PC-9 (cell line): ENCODE measurements at regions of chr10 and their contacts with region 1.

Region 1: DNA sequence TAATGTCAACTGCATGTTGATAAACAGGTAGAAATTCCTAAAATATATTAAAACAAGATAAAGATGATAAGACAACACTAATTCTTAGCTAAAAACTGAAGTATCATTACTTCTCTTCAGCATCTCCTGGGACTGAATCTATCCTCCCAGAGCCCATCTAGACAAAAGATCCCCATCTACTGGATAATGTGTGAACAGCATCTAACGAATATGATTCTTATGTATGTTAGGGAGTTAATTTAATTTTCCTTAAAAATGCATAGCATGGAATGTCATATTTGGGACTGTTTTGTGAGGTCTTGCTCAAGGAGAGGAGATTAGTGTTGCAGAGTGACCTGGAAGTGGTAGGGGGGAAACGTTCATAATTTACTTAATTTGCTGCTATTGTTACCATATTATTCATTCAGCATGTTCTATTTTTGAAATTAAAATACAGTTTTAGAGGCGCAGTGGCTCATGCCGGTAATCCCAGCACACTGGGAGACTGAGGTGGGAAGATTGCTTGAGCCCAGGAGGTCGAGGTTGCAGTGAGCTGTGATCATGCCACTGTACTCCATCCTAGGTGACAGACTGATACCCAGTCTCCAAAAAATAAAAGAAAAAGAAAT is 305.1 kb upstream of the CSTF2T start:
- DNase-seq: no peak
- H3K4me3 ChIP-seq: no peak overlapping the region
- H3K27ac ChIP-seq: no peak overlapping the region
- H3K4me1 ChIP-seq: no peaks in the 10 kb centered on the region
- H3K27me3 ChIP-seq: no peaks in the 10 kb centered on the region
- CTCF ChIP-seq: peak; percentile 78

Region 2: DNA sequence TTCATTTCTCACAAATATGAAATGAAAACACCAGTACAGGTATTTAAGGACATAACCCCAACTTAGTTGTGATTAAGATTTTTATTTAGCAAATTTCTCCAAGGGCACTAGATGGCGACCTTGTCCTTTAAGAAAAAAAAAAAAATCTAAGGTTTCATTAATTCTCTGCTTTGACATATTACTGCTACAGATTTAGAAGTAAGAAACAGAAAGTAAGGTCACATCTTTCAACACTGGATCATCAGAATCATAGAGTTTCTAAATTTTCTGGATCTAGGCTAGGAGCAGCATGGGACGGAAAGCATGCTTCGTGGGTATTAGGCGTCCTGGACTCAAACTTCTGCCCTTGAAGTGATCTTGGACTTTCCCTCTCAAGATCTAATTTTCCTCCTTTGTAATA is 1015.7 kb before region 1 on chr10:
- CTCF ChIA-PET with region 1: no interaction called
- POLR2A ChIA-PET with region 1: no interaction called
- intact Hi-C with region 1: loop called (anchors 5 kb)
- DNase-seq: no peak
- H3K4me3 ChIP-seq: no peak overlapping the region
- H3K27ac ChIP-seq: no peak overlapping the region
- H3K4me1 ChIP-seq: 0 out of 2 replicates have a peak, but pooled peaks cover 4% of the 10 kb centered on the region
- H3K27me3 ChIP-seq: peaks cover 20% of the 10 kb centered on the region; the same call in 1 of the 2 replicates
- CTCF ChIP-seq: peak; percentile 60

Region 3: DNA sequence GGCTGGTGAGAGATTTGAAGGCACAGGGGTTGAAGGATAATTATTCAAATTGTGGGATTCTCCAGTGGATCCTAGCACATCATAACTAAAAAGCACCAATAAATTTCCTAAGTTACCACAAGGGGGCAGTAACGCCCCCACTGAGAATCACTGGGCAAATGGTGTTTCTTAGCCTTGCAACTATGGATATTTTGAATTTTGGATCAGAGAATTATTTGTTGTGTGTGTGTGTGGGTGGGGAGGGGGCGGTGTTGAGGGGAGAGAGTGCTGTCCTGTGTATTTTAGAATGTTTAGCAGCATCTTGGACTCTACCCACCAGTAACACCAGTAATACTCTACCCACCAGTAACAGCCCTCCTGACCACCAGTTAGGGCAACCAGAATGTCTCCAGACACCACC is 993.5 kb before region 1 on chr10:
- CTCF ChIA-PET with region 1: no interaction called
- POLR2A ChIA-PET with region 1: no interaction called
- intact Hi-C with region 1: loop called (anchors 1 kb)
- DNase-seq: no peak
- H3K4me3 ChIP-seq: no peak overlapping the region
- H3K27ac ChIP-seq: no peak overlapping the region
- H3K4me1 ChIP-seq: no peaks in the 10 kb centered on the region
- H3K27me3 ChIP-seq: no peaks in the 10 kb centered on the region
- CTCF ChIP-seq: peak; percentile 92

Region 4: GRCh38 chr10:51063659-51064535 is 940.5 kb before region 1 on chr10:
- CTCF ChIA-PET with region 1: no interaction called
- POLR2A ChIA-PET with region 1: no interaction called
- intact Hi-C with region 1: loop called (anchors 5 kb)
- DNase-seq: no peak
- H3K4me3 ChIP-seq: no peak overlapping the region
- H3K27ac ChIP-seq: no peak overlapping the region
- H3K4me1 ChIP-seq: no peaks in the 10 kb centered on the region
- H3K27me3 ChIP-seq: no peaks in the 10 kb centered on the region
- CTCF ChIP-seq: peak; percentile 79

Region 5: GRCh38 chr10:51389415-51390321 is 614.8 kb before region 1 on chr10:
- CTCF ChIA-PET with region 1: interaction called, 4 read pairs
- POLR2A ChIA-PET with region 1: no interaction called
- intact Hi-C with region 1: loop called (anchors 5 kb)
- DNase-seq: peak in 1 of 2 experiments; percentile 11
- H3K4me3 ChIP-seq: no peak overlapping the region
- H3K27ac ChIP-seq: no peak overlapping the region
- H3K4me1 ChIP-seq: no peaks in the 10 kb centered on the region
- H3K27me3 ChIP-seq: no peaks in the 10 kb centered on the region
- CTCF ChIP-seq: peak; percentile 81